Activated CD8-positive, alpha-beta memory T cell treated with anti-CD3 and anti-CD28 coated beads, Interleukin-2, amount 10 ng/mL, durations not matched to agents 7 days and 5 days (primary cell): ENCODE measurements at regions of chr9 and their contacts with region 1.

Region 1: DNA sequence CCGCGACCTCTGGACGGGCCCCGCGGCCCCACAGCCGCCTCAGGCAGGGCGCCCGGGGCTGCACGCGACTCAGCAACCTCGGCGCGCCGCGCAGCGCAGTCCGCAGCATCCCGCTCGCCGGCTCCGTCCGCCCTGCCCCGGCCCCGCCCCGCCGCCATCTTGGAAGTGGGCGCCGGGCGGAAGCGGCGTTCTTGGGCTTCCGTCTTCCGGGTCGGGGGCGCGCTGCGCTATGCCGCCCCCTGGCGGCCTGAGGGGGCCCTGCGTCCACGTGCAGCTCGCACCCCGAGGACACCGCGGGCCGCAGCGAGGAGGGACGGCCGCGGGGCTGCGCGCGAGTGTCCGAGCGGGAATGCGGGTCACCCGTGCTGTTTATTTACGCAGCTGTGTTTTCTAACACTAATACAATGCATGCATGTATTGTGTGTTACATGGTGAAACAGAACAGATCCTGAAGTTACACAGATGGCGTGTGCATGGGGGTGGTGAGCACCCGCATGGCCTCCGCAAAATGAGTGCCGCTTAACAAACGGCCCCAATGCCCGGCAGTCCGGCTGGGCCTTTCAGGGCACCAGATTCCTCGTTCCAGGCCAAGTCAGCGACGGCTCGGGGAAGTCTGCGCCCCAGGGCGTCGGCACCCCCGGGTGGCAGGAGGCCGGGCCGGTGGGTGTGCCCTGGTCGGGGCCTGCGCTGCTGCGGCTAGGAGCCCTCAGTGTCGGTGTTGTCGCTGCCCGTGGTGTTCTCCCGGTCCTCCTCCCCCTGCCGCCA is at the start of gene DNLZ:
- DNase-seq: peak; percentile 89
- ATAC-seq: peak; percentile 84
- H3K4me3 Mint-ChIP-seq: peak within 1 kb of the TSS; percentile 77
- H3K27ac Mint-ChIP-seq: peak within 1 kb of the TSS; percentile 90
- H3K4me1 Mint-ChIP-seq: peaks cover 11% of the 10 kb centered on the region
- H3K27me3 Mint-ChIP-seq: no peaks in the 10 kb centered on the region
- total RNA-seq, gene DNLZ: 22.4 to 23.7 TPM

Region 2: GRCh38 chr9:136312436-136312835 is 51.4 kb before region 1 on chr9:
- CTCF ChIA-PET with region 1: interaction called, 14 read pairs
- DNase-seq: peak; percentile 61
- ATAC-seq: peak; percentile 60
- H3K4me3 Mint-ChIP-seq: no peak overlapping the region
- H3K27ac Mint-ChIP-seq: no peak overlapping the region
- H3K4me1 Mint-ChIP-seq: peaks cover 7% of the 10 kb centered on the region
- H3K27me3 Mint-ChIP-seq: no peaks in the 10 kb centered on the region

Region 3: DNA sequence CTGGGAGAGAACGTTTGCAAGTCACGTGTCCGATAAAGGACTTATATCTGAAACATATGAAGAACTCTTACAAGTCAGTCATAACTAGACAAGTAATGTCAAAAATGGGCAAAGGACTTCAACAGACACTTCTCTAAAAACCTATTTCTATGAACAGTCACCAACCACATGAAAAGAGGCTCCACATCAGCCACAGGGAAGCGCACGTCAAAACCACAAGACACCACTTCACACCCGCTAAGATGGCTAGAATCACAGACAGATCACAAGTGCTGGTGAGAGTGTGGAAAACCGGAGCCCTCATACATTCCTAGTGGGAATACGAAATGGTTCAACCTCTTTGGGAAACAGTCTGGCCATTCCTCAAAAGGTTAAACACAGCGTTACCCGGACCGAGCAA is 21.2 kb after region 1 on chr9:
- CTCF ChIA-PET with region 1: interaction called, 11 read pairs
- DNase-seq: peak; percentile 82
- ATAC-seq: peak; percentile 77
- H3K4me3 Mint-ChIP-seq: peak overlapping the region; percentile 17
- H3K27ac Mint-ChIP-seq: peak overlapping the region; percentile 84
- H3K4me1 Mint-ChIP-seq: peaks cover 30% of the 10 kb centered on the region
- H3K27me3 Mint-ChIP-seq: no peaks in the 10 kb centered on the region